GM12878 (cell line): ENCODE measurements at regions of chr1 and their contacts with region 1.

Region 1: DNA sequence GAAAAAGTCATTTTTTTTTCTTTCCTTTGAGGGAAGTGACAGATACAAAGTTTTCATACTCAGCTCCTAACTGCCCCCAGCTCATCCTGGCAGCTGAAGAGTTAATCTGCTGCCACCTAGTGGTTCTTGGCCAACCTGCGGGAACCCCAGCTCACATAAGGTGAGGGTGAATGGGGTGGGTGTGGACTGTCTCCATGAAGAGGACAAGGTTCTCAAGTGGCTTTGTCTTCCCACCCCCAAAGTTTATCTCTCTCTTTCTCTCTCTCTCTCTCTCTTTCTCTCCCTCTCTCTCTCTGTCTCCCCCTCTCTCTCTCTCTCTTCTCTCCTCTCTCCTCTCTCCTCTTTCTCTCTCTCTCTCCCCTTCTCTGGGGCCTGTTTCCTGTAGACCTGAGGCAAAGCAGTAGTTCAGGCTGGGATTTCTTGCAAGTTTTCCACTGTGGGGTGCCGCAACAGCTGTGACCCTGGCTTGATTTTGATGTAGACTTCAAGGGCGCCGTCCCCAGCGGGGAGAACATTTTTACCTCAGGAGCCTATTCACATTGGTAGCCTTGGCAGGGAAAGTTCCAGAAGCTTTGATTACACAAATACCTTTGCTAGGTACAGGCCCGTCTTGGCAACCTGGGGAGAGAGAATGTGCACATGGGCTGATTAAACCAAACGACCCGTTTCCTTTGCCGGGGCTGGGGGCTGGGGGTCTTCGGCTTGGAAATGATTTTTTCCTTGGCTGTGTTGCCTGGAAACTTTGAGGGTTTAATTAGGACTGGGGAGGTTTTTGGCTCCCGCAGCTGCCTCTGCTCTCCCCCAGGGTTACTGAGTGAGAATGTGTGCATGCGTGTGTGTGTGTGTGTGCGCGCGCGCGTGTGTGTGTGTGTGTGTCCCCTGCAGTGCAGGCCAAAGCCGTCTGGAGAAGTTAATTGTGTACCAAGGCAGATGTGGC is 135.9 kb downstream of the TM2D1 start:
- DNase-seq: peak; percentile 3
- ATAC-seq: peak; percentile 100
- H3K4me3 ChIP-seq: no peak overlapping the region
- H3K27ac ChIP-seq: no peak overlapping the region
- H3K4me1 ChIP-seq: no peaks in the 10 kb centered on the region
- H3K27me3 ChIP-seq: no peaks in the 10 kb centered on the region; a peak in 1 of 4 replicates
- CTCF ChIP-seq: peak; percentile 86 to 90 (median 87)
- EP300 ChIP-seq: no peak
- POLR2A ChIP-seq: no peak
- RAD21 ChIP-seq: peak; percentile 85

Region 2: DNA sequence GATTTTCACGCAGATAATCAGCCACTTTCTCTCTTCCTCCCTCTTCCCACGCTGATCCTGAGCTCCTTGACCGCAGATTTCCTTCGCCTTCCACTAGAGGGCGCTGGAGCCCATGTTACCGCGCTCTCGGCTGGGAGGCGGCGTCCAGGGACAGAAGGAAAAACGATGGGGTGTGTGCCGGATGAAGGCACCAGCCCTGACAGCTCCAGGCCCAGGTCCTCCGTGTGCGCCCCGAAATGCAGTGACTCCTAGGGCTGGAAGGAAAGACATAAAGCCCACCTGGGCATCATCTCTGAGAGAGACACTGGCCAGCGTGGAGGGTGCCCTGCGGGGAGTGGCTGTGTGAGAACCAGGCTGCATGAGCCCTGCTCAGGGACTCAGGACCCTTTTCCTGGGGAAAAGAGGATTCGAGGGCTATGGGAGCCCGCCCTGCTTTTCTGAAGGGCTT is 1617.5 kb before region 1 on chr1:
- CTCF ChIA-PET with region 1: interaction called, 3 read pairs
- POLR2A ChIA-PET with region 1: no interaction called
- RAD21 ChIA-PET with region 1: interaction called, 3 read pairs
- SMC1A ChIA-PET with region 1: no interaction called
- in situ Hi-C with region 1: no loop called
- intact Hi-C with region 1: loop called (anchors 5 kb)
- DNase-seq: no peak
- ATAC-seq: peak; percentile 86
- H3K4me3 ChIP-seq: no peak overlapping the region
- H3K27ac ChIP-seq: no peak overlapping the region
- H3K4me1 ChIP-seq: no peaks in the 10 kb centered on the region
- H3K27me3 ChIP-seq: no peaks in the 10 kb centered on the region
- CTCF ChIP-seq: peak; percentile 87 to 90 (median 90)
- EP300 ChIP-seq: no peak
- POLR2A ChIP-seq: no peak
- RAD21 ChIP-seq: peak; percentile 68

Region 3: GRCh38 chr1:60978421-60979357 is 610.3 kb before region 1 on chr1:
- CTCF ChIA-PET with region 1: interaction called, 12 read pairs
- POLR2A ChIA-PET with region 1: no interaction called
- RAD21 ChIA-PET with region 1: interaction called, 3 read pairs
- SMC1A ChIA-PET with region 1: interaction called, 3 read pairs
- in situ Hi-C with region 1: no loop called
- intact Hi-C with region 1: loop called (anchors 10 kb)
- DNase-seq: peak; percentile 15
- ATAC-seq: peak; percentile 93
- H3K4me3 ChIP-seq: no peak overlapping the region
- H3K27ac ChIP-seq: no peak overlapping the region
- H3K4me1 ChIP-seq: no peaks in the 10 kb centered on the region
- H3K27me3 ChIP-seq: no peaks in the 10 kb centered on the region
- CTCF ChIP-seq: peak; percentile 58 to 60 (median 60)
- EP300 ChIP-seq: no peak
- POLR2A ChIP-seq: no peak
- RAD21 ChIP-seq: peak; percentile 62

Region 4: DNA sequence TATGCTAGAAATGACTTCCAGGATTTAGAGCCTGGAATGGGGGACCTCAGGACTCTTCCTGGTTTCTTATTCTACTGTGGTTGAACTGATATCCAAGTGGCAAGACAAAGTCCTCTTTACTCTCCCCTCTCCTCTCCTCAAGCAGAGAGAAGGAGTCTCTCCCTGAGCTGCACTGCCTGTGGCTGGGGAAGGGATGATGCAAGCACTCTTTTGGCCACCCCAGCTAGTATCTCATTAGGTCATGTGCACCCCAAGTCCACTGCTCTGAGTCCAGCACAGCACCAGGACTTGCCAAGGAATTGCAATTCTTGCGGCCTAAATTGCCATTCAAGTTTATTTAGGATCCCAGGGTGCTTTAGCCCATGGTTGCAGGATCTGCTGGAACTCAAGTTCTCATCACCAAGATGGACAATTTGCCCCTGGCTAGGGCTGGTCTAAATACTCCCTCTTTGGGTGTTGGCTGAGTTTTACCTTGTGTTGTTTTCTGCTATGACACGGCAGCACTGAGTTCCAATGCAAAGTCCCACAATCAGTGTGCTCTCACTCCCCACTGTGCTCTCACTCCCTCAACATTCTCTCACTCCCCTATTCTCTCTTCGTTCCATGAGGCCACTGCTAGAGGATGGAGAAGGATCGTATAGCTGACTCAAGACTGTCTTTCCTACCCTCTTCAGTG is 36.2 kb before region 1 on chr1:
- CTCF ChIA-PET with region 1: interaction called, 12 read pairs
- POLR2A ChIA-PET with region 1: no interaction called
- RAD21 ChIA-PET with region 1: no interaction called
- SMC1A ChIA-PET with region 1: no interaction called
- in situ Hi-C with region 1: no loop called
- intact Hi-C with region 1: no loop called
- DNase-seq: no peak
- ATAC-seq: no peak
- H3K4me3 ChIP-seq: no peak overlapping the region
- H3K27ac ChIP-seq: no peak overlapping the region
- H3K4me1 ChIP-seq: no peaks in the 10 kb centered on the region
- H3K27me3 ChIP-seq: no peaks in the 10 kb centered on the region
- CTCF ChIP-seq: no peak
- EP300 ChIP-seq: no peak
- POLR2A ChIP-seq: no peak
- RAD21 ChIP-seq: no peak

Region 5: DNA sequence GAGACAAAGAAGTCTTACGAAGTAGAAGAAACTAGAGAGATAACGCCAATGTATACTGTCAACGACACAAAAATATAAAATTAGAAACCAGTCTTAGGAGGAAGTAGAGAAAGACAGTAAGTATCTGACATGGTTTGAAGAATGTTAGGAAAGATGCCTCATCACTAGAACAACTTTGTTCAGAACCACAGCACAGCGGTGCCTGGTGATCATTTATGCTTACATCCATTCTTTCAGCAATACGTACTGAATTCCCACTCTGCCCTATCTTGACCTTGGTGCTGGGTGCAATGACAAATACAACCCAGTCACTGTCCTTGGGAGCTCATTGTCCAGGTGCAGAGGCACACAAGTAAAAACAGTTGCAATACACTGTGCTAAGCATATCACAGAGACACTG is 31.5 kb after region 1 on chr1:
- CTCF ChIA-PET with region 1: no interaction called
- POLR2A ChIA-PET with region 1: no interaction called
- RAD21 ChIA-PET with region 1: no interaction called
- SMC1A ChIA-PET with region 1: no interaction called
- in situ Hi-C with region 1: no loop called
- intact Hi-C with region 1: no loop called
- DNase-seq: no peak
- ATAC-seq: no peak
- H3K4me3 ChIP-seq: no peak overlapping the region
- H3K27ac ChIP-seq: no peak overlapping the region
- H3K4me1 ChIP-seq: no peaks in the 10 kb centered on the region
- H3K27me3 ChIP-seq: no peaks in the 10 kb centered on the region
- CTCF ChIP-seq: no peak
- EP300 ChIP-seq: no peak
- POLR2A ChIP-seq: no peak
- RAD21 ChIP-seq: no peak

Region 6: GRCh38 chr1:61641578-61642336 is 52.8 kb after region 1 on chr1:
- CTCF ChIA-PET with region 1: interaction called, 10 read pairs
- POLR2A ChIA-PET with region 1: no interaction called
- RAD21 ChIA-PET with region 1: no interaction called
- SMC1A ChIA-PET with region 1: no interaction called
- in situ Hi-C with region 1: no loop called
- intact Hi-C with region 1: no loop called
- DNase-seq: no peak
- ATAC-seq: peak; percentile 100
- H3K4me3 ChIP-seq: no peak overlapping the region
- H3K27ac ChIP-seq: no peak overlapping the region
- H3K4me1 ChIP-seq: 0 out of 2 replicates have a peak, but pooled peaks cover 4% of the 10 kb centered on the region
- H3K27me3 ChIP-seq: no peaks in the 10 kb centered on the region; a peak in 1 of 4 replicates
- CTCF ChIP-seq: peak; percentile 68 to 92 (median 72)
- EP300 ChIP-seq: no peak
- POLR2A ChIP-seq: no peak
- RAD21 ChIP-seq: peak; percentile 60